ENCODE measurements at regions of chr9 and their contacts with region 1.

Region 1: DNA sequence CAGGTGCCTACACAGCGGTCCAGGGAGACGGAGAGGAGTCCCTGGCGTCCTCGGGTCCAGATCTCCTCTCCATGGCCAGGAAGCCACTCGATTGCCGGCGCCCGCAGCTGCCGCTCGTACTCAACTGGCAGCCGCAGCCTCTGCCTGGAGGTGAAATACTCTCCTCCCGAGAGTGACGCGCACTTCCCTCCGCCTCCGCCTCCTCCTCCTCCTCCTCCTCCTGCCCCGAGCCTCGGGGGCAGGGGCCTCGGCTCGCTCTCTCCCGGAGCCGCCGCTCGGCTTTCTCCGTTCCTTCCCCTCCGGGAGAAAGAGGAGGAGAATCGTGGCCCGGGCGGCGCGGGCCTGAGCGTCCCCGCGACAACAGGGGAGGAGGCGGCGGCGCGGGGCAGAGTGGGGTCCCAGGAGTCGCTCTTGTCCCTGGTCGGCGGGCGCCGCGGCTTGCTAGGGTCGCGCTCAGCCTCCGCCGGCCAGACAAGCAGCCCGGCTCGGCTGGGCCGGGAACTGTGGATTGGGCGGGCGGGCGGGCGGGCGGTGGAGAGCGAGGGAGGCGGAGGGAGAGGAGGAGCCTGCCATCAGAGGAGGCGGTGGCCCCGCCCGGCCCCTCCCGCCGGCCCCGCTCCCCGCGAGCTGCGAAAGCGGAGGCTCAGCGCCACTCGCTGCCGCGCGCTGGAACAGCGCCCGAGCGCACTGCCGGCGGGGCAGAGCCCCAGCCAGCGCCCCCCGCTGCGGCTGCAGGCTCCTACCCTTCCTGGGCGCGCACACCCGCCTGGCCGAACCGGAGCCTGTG is at the start of gene CEMIP2:
- DNase-seq: peak; percentile 94
- ATAC-seq: peak; percentile 78
- H3K4me3 Mint-ChIP-seq: peak within 1 kb of the TSS; percentile 94
- H3K27ac Mint-ChIP-seq: peak within 1 kb of the TSS; percentile 91
- H3K4me1 Mint-ChIP-seq: peaks cover 43% of the 10 kb centered on the region
- H3K27me3 Mint-ChIP-seq: no peaks in the 10 kb centered on the region
- total RNA-seq, gene CEMIP2: 34.1 to 41.0 TPM

Region 2: DNA sequence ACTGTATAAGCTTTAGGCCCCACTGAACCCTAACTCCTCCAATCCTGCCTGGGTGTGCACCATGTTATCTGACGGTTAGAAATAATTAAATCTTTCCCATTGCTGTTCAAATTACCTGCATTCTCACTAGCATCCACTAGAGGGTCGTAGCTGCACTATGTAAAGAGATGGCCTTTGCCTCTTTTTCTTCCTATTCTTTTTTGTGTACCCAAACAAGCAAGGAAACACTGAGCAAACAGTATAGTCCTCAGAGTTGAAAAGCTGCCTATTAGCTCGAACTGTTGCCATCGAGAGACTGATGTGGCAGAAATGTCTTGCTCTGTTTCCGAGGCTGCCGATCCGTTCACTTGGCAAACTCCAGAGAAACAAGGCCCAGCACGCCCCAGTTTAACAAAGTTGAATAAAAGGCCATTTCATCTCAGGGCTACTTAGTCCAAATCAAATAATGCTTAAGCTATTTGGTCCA is 483.4 kb before region 1 on chr9:
- CTCF ChIA-PET with region 1: interaction called, 3 read pairs
- POLR2A ChIA-PET with region 1: no interaction called
- intact Hi-C with region 1: loop called (anchors 2 kb)
- DNase-seq: peak; percentile 25
- ATAC-seq: peak; percentile 60
- H3K4me3 Mint-ChIP-seq: no peak overlapping the region
- H3K27ac Mint-ChIP-seq: no peak overlapping the region
- H3K4me1 Mint-ChIP-seq: no peaks in the 10 kb centered on the region
- H3K27me3 Mint-ChIP-seq: peaks cover 5% of the 10 kb centered on the region

Region 3: DNA sequence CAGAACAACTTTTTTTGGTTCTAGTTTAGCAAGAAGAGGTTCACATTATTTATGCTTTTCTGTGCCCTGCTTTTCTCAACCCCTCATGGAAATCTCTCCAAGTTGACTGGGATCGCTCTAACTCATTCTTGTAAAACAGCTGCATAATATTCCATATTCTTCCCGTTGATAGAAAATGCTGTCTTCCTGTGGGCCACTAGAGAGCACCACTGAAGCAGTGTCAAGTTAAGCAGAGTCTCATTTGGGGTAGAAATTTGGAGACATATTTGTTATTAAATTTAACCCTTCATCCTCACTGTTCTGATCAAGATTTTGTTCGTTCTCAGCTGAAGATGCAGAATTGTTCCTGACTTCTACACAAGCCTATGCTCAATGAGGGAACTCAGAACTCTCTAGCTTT is 140.3 kb before region 1 on chr9:
- CTCF ChIA-PET with region 1: interaction called, 5 read pairs
- POLR2A ChIA-PET with region 1: no interaction called
- intact Hi-C with region 1: loop called in 1 of 2 experiments (anchors 1 kb)
- DNase-seq: no peak
- ATAC-seq: peak; percentile 49
- H3K4me3 Mint-ChIP-seq: no peak overlapping the region
- H3K27ac Mint-ChIP-seq: no peak overlapping the region
- H3K4me1 Mint-ChIP-seq: no peaks in the 10 kb centered on the region
- H3K27me3 Mint-ChIP-seq: peaks cover 2% of the 10 kb centered on the region

Region 4: DNA sequence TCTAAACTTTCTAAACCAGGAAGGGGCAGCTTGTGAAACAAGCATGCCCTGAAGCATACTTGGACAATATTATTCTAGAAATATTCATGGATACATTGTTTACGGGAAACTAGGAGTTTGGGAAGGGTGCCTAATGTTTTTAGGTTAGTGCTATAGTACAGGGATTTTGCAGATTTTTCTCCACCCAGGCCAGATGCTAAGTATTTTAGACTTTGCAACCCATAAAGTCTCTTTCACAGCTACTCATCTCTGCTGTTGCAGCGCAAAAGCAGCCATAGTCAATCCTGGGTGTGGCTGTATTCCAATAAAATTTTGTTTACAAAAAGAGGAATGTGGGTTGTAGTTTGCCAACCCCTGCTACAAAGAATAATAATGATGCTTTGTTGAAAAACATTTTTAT is 106.5 kb before region 1 on chr9:
- CTCF ChIA-PET with region 1: no interaction called
- POLR2A ChIA-PET with region 1: no interaction called
- intact Hi-C with region 1: no loop called
- DNase-seq: no peak
- ATAC-seq: no peak
- H3K4me3 Mint-ChIP-seq: no peak overlapping the region
- H3K27ac Mint-ChIP-seq: no peak overlapping the region
- H3K4me1 Mint-ChIP-seq: peaks cover 2% of the 10 kb centered on the region
- H3K27me3 Mint-ChIP-seq: peaks cover 2% of the 10 kb centered on the region

Region 5: GRCh38 chr9:71748280-71748743 is 20.3 kb before region 1 on chr9:
- CTCF ChIA-PET with region 1: interaction called, 3 read pairs
- POLR2A ChIA-PET with region 1: interaction called, 4 read pairs
- intact Hi-C with region 1: loop called in 1 of 2 experiments (anchors 2 kb)
- DNase-seq: no peak
- ATAC-seq: peak; percentile 70
- H3K4me3 Mint-ChIP-seq: no peak overlapping the region
- H3K27ac Mint-ChIP-seq: no peak overlapping the region
- H3K4me1 Mint-ChIP-seq: peaks cover 27% of the 10 kb centered on the region
- H3K27me3 Mint-ChIP-seq: no peaks in the 10 kb centered on the region

Region 6: DNA sequence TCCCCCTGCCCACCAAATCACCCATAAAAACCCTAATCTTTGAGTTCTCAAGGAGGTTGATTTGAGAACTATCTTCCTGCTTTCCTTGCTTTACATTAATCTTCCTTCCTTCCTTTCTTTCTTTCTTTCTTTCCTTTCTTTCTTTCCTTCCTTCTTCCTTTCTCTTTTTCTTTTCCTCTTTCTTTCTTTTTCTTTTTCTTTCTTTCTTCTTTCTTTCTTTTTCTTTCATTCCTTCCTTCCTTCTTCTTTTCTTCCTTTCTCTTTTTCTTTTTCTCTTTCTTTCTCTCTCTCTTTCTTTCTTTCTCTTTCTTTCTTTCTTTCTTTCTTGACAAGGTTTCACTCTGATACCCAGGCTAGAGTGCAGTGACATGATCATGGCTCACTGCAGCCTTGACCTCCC is 67.0 kb after region 1 on chr9:
- CTCF ChIA-PET with region 1: no interaction called
- POLR2A ChIA-PET with region 1: no interaction called
- intact Hi-C with region 1: no loop called
- DNase-seq: no peak
- ATAC-seq: no peak
- H3K4me3 Mint-ChIP-seq: no peak overlapping the region
- H3K27ac Mint-ChIP-seq: no peak overlapping the region
- H3K4me1 Mint-ChIP-seq: no peaks in the 10 kb centered on the region
- H3K27me3 Mint-ChIP-seq: no peaks in the 10 kb centered on the region

Region 7: GRCh38 chr9:71858812-71859211 is 90.2 kb after region 1 on chr9:
- CTCF ChIA-PET with region 1: no interaction called
- POLR2A ChIA-PET with region 1: no interaction called
- intact Hi-C with region 1: loop called in 1 of 2 experiments (anchors 5 kb)
- DNase-seq: no peak
- ATAC-seq: peak; percentile 96
- H3K4me3 Mint-ChIP-seq: no peak overlapping the region
- H3K27ac Mint-ChIP-seq: peak overlapping the region; percentile 40
- H3K4me1 Mint-ChIP-seq: peaks cover 18% of the 10 kb centered on the region
- H3K27me3 Mint-ChIP-seq: no peaks in the 10 kb centered on the region

Region 8: DNA sequence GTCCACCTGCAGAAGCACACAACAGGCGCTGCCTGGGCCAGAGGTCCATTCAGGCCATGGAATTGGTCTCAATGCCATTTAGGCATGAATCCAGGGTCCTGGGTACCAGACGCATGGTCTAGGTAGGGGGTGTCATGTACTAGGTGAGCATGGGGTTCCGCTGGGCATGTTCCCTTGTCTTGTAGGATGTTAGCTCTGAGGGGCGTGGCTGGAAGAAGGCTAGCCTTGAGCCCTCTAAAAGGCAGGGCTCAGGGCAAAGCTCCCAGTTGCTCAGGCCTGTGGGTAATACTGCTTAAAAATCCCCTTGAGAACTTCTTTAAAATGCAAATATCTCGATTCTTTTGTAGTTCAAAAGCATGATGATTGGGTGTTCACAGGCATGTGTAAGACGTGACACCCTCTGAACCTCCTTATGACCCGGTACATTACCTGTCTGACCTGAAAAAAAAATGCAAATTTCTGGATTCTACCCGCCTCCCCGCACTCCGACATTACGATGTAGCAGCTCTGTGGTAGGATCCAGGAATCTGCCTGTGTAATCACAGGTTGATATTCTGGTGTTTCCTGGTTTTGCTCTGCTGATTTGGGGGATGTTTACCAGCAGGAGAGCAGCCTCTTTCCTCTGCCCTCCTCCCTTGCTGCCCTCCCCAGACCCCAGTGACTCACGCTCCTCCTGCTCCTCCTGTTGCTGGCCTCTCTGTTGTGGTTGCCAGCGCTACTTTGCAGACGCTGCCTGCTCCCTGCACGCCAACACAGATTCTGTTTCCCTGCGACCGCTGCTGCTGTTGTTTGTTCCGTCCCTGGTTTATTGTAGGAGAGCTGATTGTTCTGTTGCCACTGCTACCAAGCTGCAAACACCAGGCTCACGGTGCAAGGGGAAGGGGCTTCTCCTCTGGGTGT is 758.6 kb after region 1 on chr9:
- CTCF ChIA-PET with region 1: no interaction called
- POLR2A ChIA-PET with region 1: no interaction called
- intact Hi-C with region 1: loop called in 1 of 2 experiments (anchors 10 kb)
- DNase-seq: peak; percentile 90
- ATAC-seq: peak; percentile 88
- H3K4me3 Mint-ChIP-seq: peak overlapping the region; percentile 69
- H3K27ac Mint-ChIP-seq: peak overlapping the region; percentile 94
- H3K4me1 Mint-ChIP-seq: peaks cover 43% of the 10 kb centered on the region
- H3K27me3 Mint-ChIP-seq: no peaks in the 10 kb centered on the region

Measured in activated CD4-positive, alpha-beta T cell treated with anti-CD3 and anti-CD28 coated beads for 36 hours (primary cell).